ENCODE measurements at regions of chr17 and their contacts with region 1.

Region 1: GRCh38 chr17:77881545-77881944 is 77.0 kb upstream of the TNRC6C start:
- DNase-seq: peak in 40 of 42 donors; percentile 20 to 75 (median 54)

Region 2: DNA sequence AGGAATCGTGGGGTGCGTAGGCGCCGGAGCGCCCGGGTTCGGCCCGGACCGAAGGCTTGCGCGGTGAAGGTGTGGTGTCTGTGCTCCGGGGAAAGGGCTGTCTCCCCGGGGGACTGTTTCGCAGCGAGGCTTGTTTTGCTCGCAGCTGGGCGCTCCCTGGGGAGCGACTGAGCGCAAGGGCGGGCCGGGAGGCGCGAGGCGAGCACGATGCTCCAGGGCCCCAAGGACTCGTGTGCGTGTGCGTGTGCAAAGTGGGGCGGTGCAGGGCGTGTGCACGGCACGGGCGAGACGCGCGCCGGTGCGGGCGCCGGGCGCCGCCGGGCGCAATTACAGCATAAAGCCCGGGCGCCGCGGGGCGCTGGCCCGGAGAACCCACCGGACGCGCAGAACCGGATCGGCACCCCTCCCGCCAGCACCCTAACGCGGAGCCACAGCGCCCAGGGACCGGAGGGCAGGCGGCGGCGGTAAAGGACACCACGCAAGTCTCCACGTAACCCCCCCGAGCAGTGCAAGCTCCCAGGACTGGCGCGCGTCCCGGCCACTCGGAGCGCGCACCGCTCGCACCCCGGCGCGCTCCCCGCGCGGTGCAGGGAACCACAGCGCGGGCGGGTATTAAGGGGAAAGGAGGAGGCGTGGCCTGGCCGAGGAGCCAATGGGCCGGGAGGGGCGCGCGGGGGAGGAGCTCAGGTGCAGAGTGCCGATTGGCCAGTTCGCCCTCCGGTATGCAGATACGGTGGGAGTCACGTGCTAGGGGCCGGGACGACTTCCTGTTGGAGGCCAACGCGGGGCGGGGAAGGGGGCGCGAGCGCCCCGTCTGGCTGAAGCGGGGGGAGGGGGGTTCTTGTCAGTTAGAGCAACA is 76.5 kb after region 1 on chr17 and contains the start of gene TNRC6C:
- intact Hi-C with region 1: loop called (anchors 5 kb)
- DNase-seq: peak; percentile 100

Measured in head of caudate nucleus (tissue), 42 donors.